ENCODE measurements at regions of chr22 and their contacts with region 1.

Region 1: DNA sequence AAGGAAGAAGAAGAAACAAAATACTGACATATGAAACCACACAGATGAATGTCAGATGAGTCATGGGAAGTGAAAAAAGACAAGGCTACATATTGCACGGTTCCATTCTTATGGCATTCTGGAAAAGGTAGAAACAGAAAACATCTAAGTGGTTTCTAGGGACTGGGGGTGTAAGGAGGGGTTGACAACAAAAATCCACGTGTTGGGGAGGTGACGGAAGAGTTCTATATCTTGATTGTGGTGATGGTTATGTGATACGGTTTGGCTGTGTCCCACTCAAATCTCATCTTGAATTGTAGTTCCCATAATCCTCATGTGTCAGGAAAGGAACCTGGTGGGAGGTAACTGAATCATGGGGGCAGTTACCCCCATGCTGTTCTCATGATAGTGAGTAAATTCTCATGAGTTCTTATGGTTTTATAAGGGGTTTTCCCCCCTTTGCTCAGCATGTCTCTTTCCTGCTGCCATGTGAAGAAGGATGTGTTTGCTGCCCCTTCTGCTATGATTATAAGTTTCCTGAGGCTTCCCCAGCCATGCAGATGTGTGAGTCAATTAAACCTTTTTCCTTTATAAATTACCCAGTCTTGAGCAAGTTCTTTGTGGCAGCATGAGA is 6.4 kb upstream of the ARFGAP3 start:
- DNase-seq: peak; percentile 46
- ATAC-seq: peak; percentile 16; the same call in 2 of the 3 replicates
- H3K4me3 ChIP-seq: no peak overlapping the region
- H3K27ac ChIP-seq: peak overlapping the region; percentile 24; the same call in 1 of the 2 replicates
- H3K4me1 ChIP-seq: peaks cover 9% of the 10 kb centered on the region
- H3K27me3 ChIP-seq: no peaks in the 10 kb centered on the region
- CTCF ChIP-seq: no peak
- EP300 ChIP-seq: no peak
- POLR2A ChIP-seq: no peak
- RAD21 ChIP-seq: no peak

Region 2: DNA sequence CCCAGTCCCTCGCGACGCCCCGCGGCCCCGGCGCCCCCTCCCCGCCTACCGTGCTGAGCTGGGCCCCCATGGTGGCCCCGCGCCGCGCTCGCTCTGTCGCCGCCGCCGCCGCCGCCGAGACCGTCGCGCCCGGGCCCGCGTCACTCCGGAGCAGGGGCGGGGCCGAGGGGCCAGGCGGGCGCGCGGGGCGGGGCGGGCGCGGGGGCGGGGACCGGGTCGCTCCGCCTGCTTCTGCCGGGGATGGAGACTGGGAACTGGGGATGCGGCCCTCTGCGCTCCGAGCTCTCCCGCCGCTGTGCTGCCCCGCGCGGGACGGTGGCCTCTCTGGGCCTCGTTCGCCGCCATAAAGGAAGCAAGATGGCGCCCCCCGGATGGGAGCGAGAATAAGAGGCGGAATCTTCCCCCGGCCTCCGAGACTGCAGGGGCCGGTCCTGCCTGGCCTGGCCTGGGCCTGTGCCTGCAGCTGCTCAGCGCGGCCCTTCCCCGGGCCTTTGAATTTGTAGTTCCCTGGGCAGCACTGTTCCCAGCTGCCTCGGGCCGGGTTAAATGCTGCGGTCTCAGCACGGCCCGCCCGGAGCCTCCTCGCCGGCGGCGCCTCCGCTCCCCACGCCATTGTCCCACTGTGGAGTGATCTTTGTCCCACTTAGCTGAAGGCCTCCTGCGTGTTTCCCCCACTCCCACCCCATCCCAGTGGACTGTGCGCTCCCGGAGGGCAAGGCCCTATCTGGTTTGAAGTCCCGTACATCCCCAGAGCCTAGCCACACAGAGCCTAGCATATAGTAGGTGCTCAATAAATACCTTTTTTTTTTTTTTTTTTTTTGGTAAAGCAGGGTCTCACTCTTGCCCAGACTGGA is 214.0 kb before region 1 on chr22 and contains the start of gene CYB5R3:
- CTCF ChIA-PET with region 1: interaction called, 13 read pairs
- POLR2A ChIA-PET with region 1: interaction called, 3 read pairs
- RAD21 ChIA-PET with region 1: interaction called, 3 read pairs
- SMC1A ChIA-PET with region 1: no interaction called
- in situ Hi-C with region 1: no loop called
- intact Hi-C with region 1: no loop called
- DNase-seq: no peak
- ATAC-seq: peak; percentile 79
- H3K4me3 ChIP-seq: peak within 1 kb of the TSS; percentile 100
- H3K27ac ChIP-seq: peak within 1 kb of the TSS; percentile 85
- H3K4me1 ChIP-seq: peaks cover 25% of the 10 kb centered on the region
- H3K27me3 ChIP-seq: no peaks in the 10 kb centered on the region
- CTCF ChIP-seq: no peak
- EP300 ChIP-seq: no peak
- POLR2A ChIP-seq: peak; percentile 82
- RAD21 ChIP-seq: no peak
- polyA plus RNA-seq, gene CYB5R3: 2.0 to 3.5 TPM

Region 3: DNA sequence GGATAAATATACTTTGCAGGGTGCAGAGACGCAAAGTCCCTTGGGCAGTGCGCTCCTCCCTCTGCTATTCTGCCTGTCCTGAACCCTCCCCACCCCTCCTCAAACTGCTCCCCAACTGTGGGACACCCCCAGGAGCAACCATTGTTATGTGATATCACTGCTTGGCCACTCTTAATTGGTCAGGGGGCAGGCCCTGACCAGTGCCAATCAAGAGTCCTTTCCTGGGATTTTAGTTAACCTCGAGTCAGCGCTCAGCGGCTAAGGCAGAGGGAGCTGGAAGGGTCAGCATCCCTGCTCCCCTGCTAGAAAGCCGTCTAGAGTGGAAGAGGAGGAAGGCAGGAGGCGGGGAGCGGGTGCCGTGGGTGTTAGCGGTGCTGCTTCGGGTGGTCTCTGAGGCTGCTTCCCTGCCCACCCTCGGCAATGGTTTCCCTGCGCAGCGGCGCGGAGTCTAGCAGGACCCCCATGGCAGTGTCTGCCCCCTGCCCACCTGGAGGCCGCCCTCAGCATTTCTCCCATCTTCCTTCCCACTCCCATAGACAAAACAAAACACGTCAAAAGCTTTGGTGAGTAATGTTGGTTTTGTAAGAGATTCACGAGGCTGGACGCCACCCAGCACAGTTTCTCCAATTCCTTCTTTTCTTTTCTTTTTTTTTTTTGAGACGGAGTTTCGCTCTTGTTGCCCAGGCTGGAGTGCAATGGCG is 104.4 kb before region 1 on chr22:
- CTCF ChIA-PET with region 1: no interaction called
- POLR2A ChIA-PET with region 1: no interaction called
- RAD21 ChIA-PET with region 1: no interaction called
- SMC1A ChIA-PET with region 1: no interaction called
- in situ Hi-C with region 1: no loop called
- intact Hi-C with region 1: no loop called
- DNase-seq: no peak
- ATAC-seq: no peak
- H3K4me3 ChIP-seq: no peak overlapping the region
- H3K27ac ChIP-seq: no peak overlapping the region
- H3K4me1 ChIP-seq: peaks cover 13% of the 10 kb centered on the region
- H3K27me3 ChIP-seq: no peaks in the 10 kb centered on the region
- CTCF ChIP-seq: no peak
- EP300 ChIP-seq: no peak
- POLR2A ChIP-seq: no peak
- RAD21 ChIP-seq: no peak

Region 4: GRCh38 chr22:42780070-42780540 is 83.3 kb before region 1 on chr22:
- CTCF ChIA-PET with region 1: interaction called, 17 read pairs
- POLR2A ChIA-PET with region 1: no interaction called
- RAD21 ChIA-PET with region 1: interaction called, 6 read pairs
- SMC1A ChIA-PET with region 1: interaction called, 7 read pairs
- in situ Hi-C with region 1: no loop called
- intact Hi-C with region 1: loop called (anchors 2 kb)
- DNase-seq: peak; percentile 59
- ATAC-seq: peak; percentile 91
- H3K4me3 ChIP-seq: no peak overlapping the region
- H3K27ac ChIP-seq: no peak overlapping the region
- H3K4me1 ChIP-seq: no peaks in the 10 kb centered on the region
- H3K27me3 ChIP-seq: no peaks in the 10 kb centered on the region
- CTCF ChIP-seq: peak; percentile 61 to 92 (median 85); a peak in 5 of 6 replicates
- EP300 ChIP-seq: no peak
- POLR2A ChIP-seq: no peak
- RAD21 ChIP-seq: peak; percentile 77

Region 5: DNA sequence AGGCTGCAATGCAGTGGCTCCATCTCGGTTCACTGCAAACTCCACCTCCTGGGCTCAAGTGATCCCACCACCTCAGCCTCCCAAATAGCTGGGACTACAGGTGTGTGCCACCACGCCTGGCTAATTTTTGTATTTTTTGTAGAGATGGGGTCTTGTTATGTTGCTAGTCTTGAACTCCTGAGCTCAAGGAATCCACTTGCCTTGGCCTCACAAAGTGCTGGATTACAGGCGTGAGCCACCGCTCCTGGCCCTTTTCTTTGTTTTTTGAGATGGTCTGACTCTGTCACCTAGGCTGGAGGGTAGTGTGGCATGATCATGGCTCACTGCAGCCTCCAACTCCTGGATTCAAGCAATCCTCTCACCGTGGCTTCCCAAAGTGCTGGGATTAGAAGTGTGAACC is 27.4 kb before region 1 on chr22:
- CTCF ChIA-PET with region 1: interaction called, 21 read pairs
- POLR2A ChIA-PET with region 1: interaction called, 3 read pairs
- RAD21 ChIA-PET with region 1: interaction called, 10 read pairs
- SMC1A ChIA-PET with region 1: interaction called, 5 read pairs
- in situ Hi-C with region 1: no loop called
- intact Hi-C with region 1: no loop called
- DNase-seq: no peak
- ATAC-seq: no peak
- H3K4me3 ChIP-seq: no peak overlapping the region
- H3K27ac ChIP-seq: no peak overlapping the region
- H3K4me1 ChIP-seq: peaks cover 27% of the 10 kb centered on the region
- H3K27me3 ChIP-seq: no peaks in the 10 kb centered on the region
- CTCF ChIP-seq: no peak
- EP300 ChIP-seq: no peak
- POLR2A ChIP-seq: no peak
- RAD21 ChIP-seq: no peak

Region 6: DNA sequence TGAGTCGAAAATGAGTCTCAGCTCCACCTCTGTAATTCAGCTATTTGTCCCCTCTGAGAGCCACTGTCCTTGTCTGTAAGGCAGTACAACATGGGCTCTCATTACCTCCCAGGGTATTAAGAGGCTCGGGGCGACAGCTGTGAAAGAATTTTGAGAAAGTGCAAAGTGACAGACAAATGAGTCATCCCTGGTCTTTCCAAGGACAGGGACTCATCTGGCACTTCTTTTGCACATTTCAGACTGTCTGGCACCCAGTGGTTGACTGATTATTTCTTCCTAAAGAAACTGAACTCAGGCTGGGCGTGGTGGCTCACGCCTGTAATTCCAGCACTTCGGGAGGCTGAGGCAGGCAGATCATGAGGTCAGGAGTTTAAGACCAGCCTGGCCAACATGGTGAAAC is 55.7 kb after region 1 on chr22:
- CTCF ChIA-PET with region 1: interaction called, 16 read pairs
- POLR2A ChIA-PET with region 1: no interaction called
- RAD21 ChIA-PET with region 1: interaction called, 6 read pairs
- SMC1A ChIA-PET with region 1: interaction called, 9 read pairs
- in situ Hi-C with region 1: no loop called
- intact Hi-C with region 1: no loop called
- DNase-seq: no peak
- ATAC-seq: peak; percentile 36; the same call in 2 of the 3 replicates
- H3K4me3 ChIP-seq: no peak overlapping the region
- H3K27ac ChIP-seq: peak overlapping the region; percentile 33; the same call in 1 of the 2 replicates
- H3K4me1 ChIP-seq: no peaks in the 10 kb centered on the region; the same call in 1 of the 2 replicates
- H3K27me3 ChIP-seq: no peaks in the 10 kb centered on the region
- CTCF ChIP-seq: no peak
- EP300 ChIP-seq: no peak
- POLR2A ChIP-seq: no peak
- RAD21 ChIP-seq: no peak

Region 7: GRCh38 chr22:43014869-43015676 is 151.6 kb after region 1 on chr22 and contains the start of gene PACSIN2:
- CTCF ChIA-PET with region 1: interaction called, 20 read pairs
- POLR2A ChIA-PET with region 1: no interaction called
- RAD21 ChIA-PET with region 1: interaction called, 17 read pairs
- SMC1A ChIA-PET with region 1: interaction called, 4 read pairs
- in situ Hi-C with region 1: no loop called
- intact Hi-C with region 1: no loop called
- DNase-seq: peak; percentile 82
- ATAC-seq: peak; percentile 98
- H3K4me3 ChIP-seq: peak within 1 kb of the TSS; percentile 97
- H3K27ac ChIP-seq: peak within 1 kb of the TSS; percentile 68
- H3K4me1 ChIP-seq: no peaks in the 10 kb centered on the region
- H3K27me3 ChIP-seq: no peaks in the 10 kb centered on the region
- CTCF ChIP-seq: 0 out of 6 replicates have a peak, but pooled peaks of 1 of the 3 experiments have one; percentile 0
- EP300 ChIP-seq: no peak
- POLR2A ChIP-seq: peak; percentile 99
- RAD21 ChIP-seq: no peak
- polyA plus RNA-seq, gene PACSIN2: 0.93 to 1.6 TPM